Adrenal gland (tissue), 19 donors: ENCODE measurements at regions of chr1 and their contacts with region 1.

Region 1: DNA sequence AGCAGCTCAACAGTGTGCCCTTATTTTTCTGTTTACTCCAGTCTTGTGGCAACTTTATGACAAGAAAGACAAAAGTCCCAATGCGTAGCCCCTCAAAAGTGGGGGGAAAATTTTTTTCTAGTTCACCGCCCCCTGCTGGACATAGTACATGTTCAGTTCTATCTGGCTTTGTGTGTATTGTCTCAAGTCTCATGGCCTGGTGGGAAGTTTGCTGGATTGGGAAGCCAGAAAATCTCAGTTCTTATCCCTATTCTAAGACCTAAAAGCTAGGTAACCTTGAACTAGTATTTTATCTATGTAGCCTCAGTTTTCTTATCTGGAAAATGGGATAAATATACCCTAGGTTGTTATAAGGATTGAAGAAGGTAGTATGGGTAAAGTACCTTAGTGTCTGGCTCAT is 55.8 kb upstream of the LDLRAP1 start:
- DNase-seq: no peak
- H3K4me3 ChIP-seq: no peak overlapping the region
- H3K27ac ChIP-seq: no peak overlapping the region
- H3K4me1 ChIP-seq: peaks cover 9 to 38% of the 10 kb centered on the region in 2 donors
- H3K27me3 ChIP-seq: no peaks in the 10 kb centered on the region
- CTCF ChIP-seq: peak in 5 of 6 experiments; percentile 12 to 43 (median 25)
- POLR2A ChIP-seq: no peak

Region 2: DNA sequence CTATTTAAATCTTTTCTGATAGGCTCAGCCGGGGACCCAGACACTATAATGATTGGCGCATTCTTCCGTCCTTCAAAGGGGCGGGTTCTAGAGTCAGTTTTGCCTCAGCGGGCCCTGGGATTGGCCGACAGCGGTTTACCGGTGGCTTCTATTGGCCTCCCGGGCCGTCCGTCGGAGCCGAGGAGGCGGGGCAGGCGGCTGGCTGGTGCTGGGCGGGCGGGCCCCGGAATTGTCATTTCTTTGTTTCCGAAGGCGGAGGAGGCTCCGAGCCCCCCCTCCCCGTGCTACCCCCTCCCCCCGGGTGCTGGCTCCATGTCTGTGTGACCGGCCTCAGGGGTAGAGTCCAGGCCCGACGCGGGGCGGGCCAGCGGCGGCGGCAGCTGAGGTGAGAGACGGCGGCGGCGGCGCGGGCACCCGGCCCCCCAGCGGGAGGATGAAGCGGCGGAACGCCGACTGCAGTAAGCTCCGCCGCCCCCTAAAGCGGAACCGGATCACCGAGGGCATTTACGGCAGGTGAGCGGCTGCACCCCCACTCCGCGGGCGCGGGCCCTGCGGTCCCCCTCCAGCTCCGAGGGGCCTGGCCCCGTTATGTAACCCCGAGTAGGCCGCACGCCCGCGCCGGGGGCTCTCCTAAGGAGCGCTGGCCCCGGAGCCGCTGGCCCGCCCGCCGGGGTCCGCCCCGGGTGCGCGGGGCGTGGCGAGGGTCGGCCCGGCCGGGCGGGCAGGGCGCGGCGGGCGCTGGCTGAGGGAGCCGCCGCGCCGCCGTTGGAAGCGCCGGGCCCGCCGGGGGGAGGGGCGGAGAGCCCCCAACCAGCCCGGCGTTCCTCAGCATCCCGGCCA is 56.7 kb before region 1 on chr1 and contains the start of gene MACO1:
- intact Hi-C with region 1: loop called in 1 of 2 experiments (anchors 10 kb)
- DNase-seq: peak; percentile 98 to 99 (median 98)
- H3K4me3 ChIP-seq: peak within 1 kb of the TSS; percentile 64 to 92 (median 76)
- H3K27ac ChIP-seq: peak within 1 kb of the TSS; percentile 77 to 97 (median 95)
- H3K4me1 ChIP-seq: peaks cover 38 to 46% of the 10 kb centered on the region in 2 donors
- H3K27me3 ChIP-seq: no peaks in the 10 kb centered on the region
- CTCF ChIP-seq: peak in 2 of 6 experiments; percentile 9 to 15
- POLR2A ChIP-seq: peak; percentile 9 to 58
- total RNA-seq, gene MACO1: 25.2 to 48.4 (median 30.7) TPM